ENCODE measurements at regions of chr10 and their contacts with region 1.

Region 1: GRCh38 chr10:87927091-87927490 is 63.7 kb downstream of the PTEN start:
- DNase-seq: peak; percentile 58
- H3K4me3 ChIP-seq: peak overlapping the region in 1 of 3 experiments; percentile 12
- H3K27ac ChIP-seq: peak overlapping the region; percentile 15
- H3K4me1 ChIP-seq: peaks cover 53% of the 10 kb centered on the region
- H3K27me3 ChIP-seq: no peaks in the 10 kb centered on the region
- CTCF ChIP-seq: no peak
- POLR2A ChIP-seq: no peak

Region 2: GRCh38 chr10:86688398-86688921 is 1238.6 kb before region 1 on chr10:
- CTCF ChIA-PET with region 1: no interaction called
- POLR2A ChIA-PET with region 1: no interaction called
- dilution Hi-C with region 1: no loop called
- intact Hi-C with region 1: no loop called
- DNase-seq: peak; percentile 52
- H3K4me3 ChIP-seq: no peak overlapping the region
- H3K27ac ChIP-seq: no peak overlapping the region
- H3K4me1 ChIP-seq: no peaks in the 10 kb centered on the region
- H3K27me3 ChIP-seq: peaks cover 30 to 43% of the 10 kb centered on the region in 2 experiments
- CTCF ChIP-seq: peak; percentile 74 to 76
- POLR2A ChIP-seq: no peak

Region 3: GRCh38 chr10:87961046-87961713 is 34.1 kb after region 1 on chr10:
- CTCF ChIA-PET with region 1: interaction called, 8 read pairs
- POLR2A ChIA-PET with region 1: no interaction called
- dilution Hi-C with region 1: no loop called
- intact Hi-C with region 1: loop called (anchors 2 kb)
- DNase-seq: peak; percentile 84
- H3K4me3 ChIP-seq: no peak overlapping the region
- H3K27ac ChIP-seq: peak overlapping the region; percentile 58
- H3K4me1 ChIP-seq: peaks cover 26% of the 10 kb centered on the region
- H3K27me3 ChIP-seq: no peaks in the 10 kb centered on the region
- CTCF ChIP-seq: no peak
- POLR2A ChIP-seq: no peak

Measured in endothelial cell of umbilical vein (primary cell).